ENCODE measurements at regions of chr14 and their contacts with region 1.

Region 1: DNA sequence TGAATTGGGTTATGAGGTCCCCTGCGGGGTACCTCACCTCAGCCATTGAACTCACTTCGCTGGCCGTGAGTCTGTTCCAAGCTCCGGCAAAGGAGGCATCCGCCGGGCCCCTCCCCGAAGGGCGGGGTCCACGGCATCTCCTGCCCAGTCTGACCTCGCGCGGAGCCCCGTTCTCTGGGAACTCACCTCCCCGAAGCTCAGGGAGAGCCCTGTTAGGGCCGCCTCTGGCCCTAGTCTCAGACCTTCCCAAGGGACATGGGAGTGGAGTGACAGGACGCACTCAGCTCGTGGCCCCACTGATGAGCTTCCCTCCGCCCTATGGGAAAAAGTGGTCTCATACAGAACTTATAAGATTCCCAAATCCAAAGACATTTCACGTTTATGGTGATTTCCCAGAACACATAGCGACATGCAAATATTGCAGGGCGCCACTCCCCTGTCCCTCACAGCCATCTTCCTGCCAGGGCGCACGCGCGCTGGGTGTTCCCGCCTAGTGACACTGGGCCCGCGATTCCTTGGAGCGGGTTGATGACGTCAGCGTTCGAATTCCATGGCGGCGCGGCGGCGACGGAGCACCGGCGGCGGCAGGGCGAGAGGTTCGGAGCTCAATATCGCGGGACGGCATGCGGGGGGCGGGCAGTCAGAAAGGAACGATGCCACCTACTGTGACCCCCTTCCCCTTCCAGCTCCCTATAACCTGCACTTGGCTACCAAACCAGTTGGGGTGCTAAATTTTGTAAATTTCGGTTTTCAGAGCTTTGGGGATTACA is at the start of gene PARP2:
- DNase-seq: peak; percentile 99
- H3K4me3 ChIP-seq: peak within 1 kb of the TSS; percentile 81
- H3K27ac ChIP-seq: peak within 1 kb of the TSS; percentile 91
- H3K4me1 ChIP-seq: peaks cover 16% of the 10 kb centered on the region
- CTCF ChIP-seq: peak; percentile 52; the same call in 1 of the 2 replicates
- total RNA-seq, gene PARP2: 44.4 and 45.3 TPM in 2 replicates

Region 2: DNA sequence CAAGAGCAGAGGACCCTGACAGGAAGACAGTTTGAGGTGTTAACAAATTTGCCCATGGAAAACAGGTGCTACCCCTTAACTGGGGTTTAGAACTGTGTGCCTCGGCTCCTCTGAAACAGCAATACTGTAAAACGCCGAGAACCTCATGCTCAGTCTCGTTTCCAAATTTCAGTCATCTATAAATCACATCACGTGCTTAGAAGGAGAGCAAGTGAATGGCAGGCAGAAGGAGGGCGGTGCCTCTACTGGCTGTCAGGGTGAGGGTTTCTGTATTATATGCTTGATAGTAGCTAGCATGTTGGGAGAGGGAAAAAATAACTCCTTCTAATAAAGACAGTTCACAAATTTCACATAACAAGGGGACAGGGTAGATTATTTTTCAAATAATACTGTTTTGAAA is 312.2 kb before region 1 on chr14:
- CTCF ChIA-PET with region 1: no interaction called
- POLR2A ChIA-PET with region 1: no interaction called
- intact Hi-C with region 1: no loop called
- DNase-seq: no peak
- H3K4me3 ChIP-seq: no peak overlapping the region
- H3K27ac ChIP-seq: no peak overlapping the region
- H3K4me1 ChIP-seq: no peaks in the 10 kb centered on the region
- CTCF ChIP-seq: no peak

Region 3: DNA sequence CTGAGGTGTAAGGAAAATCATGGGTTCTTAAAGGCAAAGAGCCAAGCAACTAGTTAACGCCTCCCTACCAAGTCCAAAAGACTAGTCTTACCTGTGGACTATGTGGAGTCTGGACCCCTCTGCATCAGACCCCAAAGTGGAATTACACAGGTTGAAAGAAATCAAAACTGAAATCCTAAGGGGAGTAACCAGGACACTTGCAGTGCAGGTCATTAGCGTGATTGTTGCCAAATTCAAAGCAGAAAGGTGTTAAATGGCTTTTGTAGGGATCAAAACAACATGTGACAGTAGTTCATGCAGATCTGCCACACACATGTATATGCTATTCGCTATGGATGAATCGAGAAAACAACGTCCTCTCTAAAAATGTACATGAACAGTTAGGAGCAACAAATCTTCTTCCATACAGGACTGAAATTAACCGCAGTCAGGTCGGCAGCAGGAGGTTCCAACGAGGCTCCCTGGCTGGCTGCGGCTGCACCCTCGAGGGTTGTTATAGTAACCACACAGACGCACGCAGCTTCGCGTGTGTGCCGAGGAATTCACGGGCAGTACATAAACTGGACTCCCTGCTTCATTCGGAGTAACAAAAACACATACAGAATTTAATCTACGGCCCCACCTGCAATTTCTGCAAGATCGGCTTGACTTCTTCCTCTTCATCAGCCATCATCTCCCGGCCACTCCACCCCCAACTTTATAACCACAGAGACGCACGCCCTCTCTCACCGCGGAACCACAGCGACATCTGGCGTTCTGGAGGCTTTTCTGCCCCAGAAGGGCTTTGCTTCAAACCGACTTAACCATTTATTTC is 37.8 kb before region 1 on chr14 and contains the start of gene TTC5:
- CTCF ChIA-PET with region 1: no interaction called
- POLR2A ChIA-PET with region 1: interaction called, 4 read pairs
- intact Hi-C with region 1: loop called (anchors 1 kb)
- DNase-seq: peak; percentile 90
- H3K4me3 ChIP-seq: peak within 1 kb of the TSS; percentile 84
- H3K27ac ChIP-seq: peak within 1 kb of the TSS; percentile 29
- H3K4me1 ChIP-seq: peaks cover 14% of the 10 kb centered on the region
- CTCF ChIP-seq: peak; percentile 98
- total RNA-seq, gene TTC5: 14.9 and 17.9 TPM in 2 replicates

Region 4: GRCh38 chr14:20332788-20333493 is 10.3 kb before region 1 on chr14 and contains the start of gene CCNB1IP1:
- CTCF ChIA-PET with region 1: interaction called, 11 read pairs
- POLR2A ChIA-PET with region 1: interaction called, 76 read pairs
- intact Hi-C with region 1: loop called (anchors 1 kb)
- DNase-seq: peak; percentile 91
- H3K4me3 ChIP-seq: peak within 1 kb of the TSS; percentile 83
- H3K27ac ChIP-seq: peak within 1 kb of the TSS; percentile 67
- H3K4me1 ChIP-seq: peaks cover 52% of the 10 kb centered on the region
- CTCF ChIP-seq: no peak
- total RNA-seq, gene CCNB1IP1: 56.6 and 58.5 TPM in 2 replicates

Region 5: GRCh38 chr14:20454516-20455354 is 111.5 kb after region 1 on chr14 and contains the starts of genes APEX1 and OSGEP:
- CTCF ChIA-PET with region 1: no interaction called
- POLR2A ChIA-PET with region 1: interaction called, 18 read pairs
- intact Hi-C with region 1: loop called (anchors 1 kb)
- DNase-seq: peak; percentile 100
- H3K4me3 ChIP-seq: peak within 1 kb of the TSS; percentile 99
- H3K27ac ChIP-seq: peak within 1 kb of the TSS; percentile 78
- H3K4me1 ChIP-seq: peaks cover 42% of the 10 kb centered on the region
- CTCF ChIP-seq: no peak
- total RNA-seq, gene APEX1: 110 and 117 TPM in 2 replicates
- total RNA-seq, gene OSGEP: 85.2 and 86.6 TPM in 2 replicates

Region 6: GRCh38 chr14:20469242-20469889 is 126.1 kb after region 1 on chr14 and contains the start of gene PNP:
- CTCF ChIA-PET with region 1: no interaction called
- POLR2A ChIA-PET with region 1: interaction called, 58 read pairs
- intact Hi-C with region 1: loop called (anchors 1 kb)
- DNase-seq: peak; percentile 92
- H3K4me3 ChIP-seq: peak within 1 kb of the TSS; percentile 83
- H3K27ac ChIP-seq: peak within 1 kb of the TSS; percentile 71
- H3K4me1 ChIP-seq: peaks cover 23% of the 10 kb centered on the region
- CTCF ChIP-seq: peak; percentile 21; the same call in 1 of the 2 replicates
- total RNA-seq, gene PNP: 120 and 127 TPM in 2 replicates

Region 7: GRCh38 chr14:20682435-20683124 is 339.3 kb after region 1 on chr14:
- CTCF ChIA-PET with region 1: interaction called, 3 read pairs
- POLR2A ChIA-PET with region 1: interaction called, 3 read pairs
- intact Hi-C with region 1: loop called (anchors 2 kb)
- DNase-seq: peak; percentile 68
- H3K4me3 ChIP-seq: peak overlapping the region; percentile 74
- H3K27ac ChIP-seq: peak overlapping the region; percentile 49
- H3K4me1 ChIP-seq: peaks cover 42% of the 10 kb centered on the region
- CTCF ChIP-seq: no peak

Measured in OCI-LY7 (cell line).